Activated T-helper 1 cell treated with anti-CD3 and anti-CD28 coated beads, Interleukin-12 subunit alpha, Interleukin-12 subunit beta, Interleukin-2, Interleukin-4 antibody, amounts not matched to agents 30 ng/mL and 10 ng/mL and 1 ng/mL, durations not matched to agents 14 hours and 24 hours and 36 hours (primary cell): ENCODE measurements at regions of chr5 and their contacts with region 1.

Region 1: DNA sequence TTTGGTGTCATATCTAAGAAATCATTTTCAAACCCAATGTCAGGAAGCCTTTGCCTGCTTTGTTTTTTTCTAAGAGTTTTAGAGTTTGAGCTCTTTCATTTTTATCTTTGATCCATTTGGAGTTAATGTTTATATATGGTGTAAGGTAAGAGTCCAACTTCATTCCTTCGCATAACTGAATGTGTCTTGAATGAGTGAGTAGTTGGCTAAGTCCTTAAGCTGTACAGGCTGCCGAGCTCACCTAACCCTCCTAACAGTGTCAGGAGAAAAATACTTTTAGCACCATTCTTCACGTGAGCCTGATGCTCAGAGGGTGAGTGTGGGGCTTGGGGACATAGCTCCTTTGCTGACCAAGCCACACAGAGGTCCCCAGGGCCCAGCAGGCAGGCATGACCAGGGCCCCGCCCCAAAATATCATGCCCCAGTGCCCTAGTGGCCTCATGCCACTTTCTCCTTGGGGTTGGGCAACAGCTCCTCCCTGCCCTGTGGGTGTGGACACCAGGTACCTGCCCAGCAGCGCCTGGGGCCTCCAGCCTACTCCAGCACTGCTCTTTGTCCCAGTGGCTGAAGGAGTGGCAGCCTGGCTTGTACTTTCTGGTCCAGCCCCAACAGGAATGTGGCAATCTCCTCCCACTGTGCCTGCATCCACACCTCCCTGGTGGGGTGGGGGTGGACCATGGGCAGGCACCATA is 17.2 kb downstream of the PPARGC1B start:
- DNase-seq: no peak
- H3K4me3 Mint-ChIP-seq: no peak overlapping the region
- H3K27ac Mint-ChIP-seq: no peak overlapping the region
- H3K4me1 Mint-ChIP-seq: peaks cover 5% of the 10 kb centered on the region
- H3K27me3 Mint-ChIP-seq: no peaks in the 10 kb centered on the region

Region 2: DNA sequence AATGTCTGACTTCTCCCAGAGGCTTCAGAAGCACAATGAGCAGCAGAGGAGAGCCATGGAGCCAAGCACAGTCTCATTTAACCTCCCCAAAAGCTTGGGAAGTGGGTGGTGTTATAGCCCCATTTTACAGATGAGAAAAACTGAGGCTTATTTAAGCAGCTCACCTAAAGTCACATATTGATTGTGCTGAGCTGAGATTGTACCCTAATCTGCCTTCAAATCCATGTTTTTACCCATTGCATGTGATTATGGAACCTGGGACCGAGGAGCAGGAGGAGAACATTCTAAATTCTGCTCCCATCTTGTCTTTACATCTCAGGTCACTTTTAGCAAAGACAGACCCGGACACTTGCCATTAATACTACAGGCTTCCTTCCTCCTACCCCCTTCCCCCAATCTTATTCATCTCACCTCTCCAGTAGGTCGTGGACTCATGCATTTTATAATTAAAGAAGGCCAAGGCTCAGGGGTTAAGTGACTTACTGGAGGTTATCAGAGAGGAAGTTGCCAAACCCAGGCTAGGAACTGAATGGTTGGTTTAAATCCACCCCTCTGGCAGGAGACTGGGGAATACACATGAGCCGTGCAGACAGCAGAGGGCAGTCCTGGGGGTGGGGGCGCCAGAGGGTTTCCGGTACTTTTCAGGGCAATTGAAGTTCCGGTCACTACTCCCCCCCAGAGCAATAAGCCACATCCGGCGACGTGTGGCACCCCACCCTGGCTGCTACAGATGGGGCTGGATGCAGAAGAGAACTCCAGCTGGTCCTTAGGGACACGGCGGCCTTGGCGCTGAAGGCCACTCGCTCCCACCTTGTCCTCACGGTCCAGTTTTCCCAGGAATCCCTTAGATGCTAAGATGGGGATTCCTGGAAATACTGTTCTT is 317.2 kb before region 1 on chr5:
- intact Hi-C with region 1: no loop called
- DNase-seq: no peak
- H3K4me3 Mint-ChIP-seq: no peak overlapping the region
- H3K27ac Mint-ChIP-seq: no peak overlapping the region
- H3K4me1 Mint-ChIP-seq: no peaks in the 10 kb centered on the region
- H3K27me3 Mint-ChIP-seq: no peaks in the 10 kb centered on the region

Region 3: GRCh38 chr5:149680810-149681221 is 66.5 kb before region 1 on chr5:
- intact Hi-C with region 1: no loop called
- DNase-seq: no peak
- H3K4me3 Mint-ChIP-seq: no peak overlapping the region
- H3K27ac Mint-ChIP-seq: no peak overlapping the region
- H3K4me1 Mint-ChIP-seq: no peaks in the 10 kb centered on the region
- H3K27me3 Mint-ChIP-seq: peaks cover 7% of the 10 kb centered on the region

Region 4: GRCh38 chr5:149702934-149703646 is 44.2 kb before region 1 on chr5:
- intact Hi-C with region 1: loop called (anchors 1 kb)
- DNase-seq: no peak
- H3K4me3 Mint-ChIP-seq: no peak overlapping the region
- H3K27ac Mint-ChIP-seq: no peak overlapping the region
- H3K4me1 Mint-ChIP-seq: no peaks in the 10 kb centered on the region
- H3K27me3 Mint-ChIP-seq: peaks cover 37% of the 10 kb centered on the region

Region 5: GRCh38 chr5:149714877-149715505 is 32.3 kb before region 1 on chr5:
- intact Hi-C with region 1: no loop called
- DNase-seq: no peak
- H3K4me3 Mint-ChIP-seq: no peak overlapping the region
- H3K27ac Mint-ChIP-seq: peak overlapping the region; percentile 72
- H3K4me1 Mint-ChIP-seq: no peaks in the 10 kb centered on the region
- H3K27me3 Mint-ChIP-seq: peaks cover 18% of the 10 kb centered on the region

Region 6: DNA sequence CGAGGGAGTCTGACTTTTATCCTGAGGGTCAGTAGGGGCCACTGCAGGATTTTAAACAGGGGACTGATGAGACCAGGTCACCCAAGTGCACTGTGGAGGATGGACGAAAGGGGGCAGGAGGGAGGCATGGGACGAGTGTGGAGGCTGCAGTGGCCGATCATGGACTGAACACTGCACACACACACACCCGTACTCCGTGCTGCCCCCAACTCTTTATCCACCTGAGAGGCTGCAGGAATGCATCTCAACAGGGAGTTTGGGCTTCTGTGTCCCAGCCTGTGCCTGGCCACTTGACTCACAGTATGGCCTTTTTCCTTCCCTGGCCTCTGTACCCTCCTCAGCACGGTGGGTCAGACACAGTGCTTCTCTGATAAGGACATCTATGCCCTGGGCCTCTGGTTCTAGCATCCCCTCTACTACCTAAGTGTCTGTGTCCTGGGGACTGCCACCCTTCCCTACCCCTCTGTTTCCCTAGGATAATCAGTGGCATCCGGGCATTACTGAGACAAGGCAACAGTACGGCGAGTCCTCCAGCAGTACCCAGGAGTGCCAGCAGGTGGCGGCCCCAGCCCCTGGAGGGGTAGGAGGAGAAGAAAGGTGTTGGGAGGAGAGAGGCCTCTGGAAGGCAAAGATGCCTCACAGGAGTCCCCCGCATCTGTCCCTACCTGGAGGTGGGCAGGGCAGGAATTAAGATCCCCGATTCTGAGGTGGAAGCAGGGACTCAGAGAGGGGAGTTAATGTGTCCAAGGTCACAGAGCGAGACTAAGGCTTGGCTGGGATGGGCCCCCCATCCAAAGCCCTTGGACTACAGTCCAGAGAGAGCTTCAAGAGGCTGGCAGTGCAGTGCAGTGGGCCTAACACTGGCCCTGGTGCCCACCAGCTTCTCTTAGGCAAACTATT is 414.2 kb after region 1 on chr5:
- intact Hi-C with region 1: no loop called
- DNase-seq: peak; percentile 68
- H3K4me3 Mint-ChIP-seq: no peak overlapping the region
- H3K27ac Mint-ChIP-seq: no peak overlapping the region
- H3K4me1 Mint-ChIP-seq: no peaks in the 10 kb centered on the region
- H3K27me3 Mint-ChIP-seq: peaks cover 21% of the 10 kb centered on the region